ENCODE measurements at regions of chr2 and their contacts with region 1.

Region 1: DNA sequence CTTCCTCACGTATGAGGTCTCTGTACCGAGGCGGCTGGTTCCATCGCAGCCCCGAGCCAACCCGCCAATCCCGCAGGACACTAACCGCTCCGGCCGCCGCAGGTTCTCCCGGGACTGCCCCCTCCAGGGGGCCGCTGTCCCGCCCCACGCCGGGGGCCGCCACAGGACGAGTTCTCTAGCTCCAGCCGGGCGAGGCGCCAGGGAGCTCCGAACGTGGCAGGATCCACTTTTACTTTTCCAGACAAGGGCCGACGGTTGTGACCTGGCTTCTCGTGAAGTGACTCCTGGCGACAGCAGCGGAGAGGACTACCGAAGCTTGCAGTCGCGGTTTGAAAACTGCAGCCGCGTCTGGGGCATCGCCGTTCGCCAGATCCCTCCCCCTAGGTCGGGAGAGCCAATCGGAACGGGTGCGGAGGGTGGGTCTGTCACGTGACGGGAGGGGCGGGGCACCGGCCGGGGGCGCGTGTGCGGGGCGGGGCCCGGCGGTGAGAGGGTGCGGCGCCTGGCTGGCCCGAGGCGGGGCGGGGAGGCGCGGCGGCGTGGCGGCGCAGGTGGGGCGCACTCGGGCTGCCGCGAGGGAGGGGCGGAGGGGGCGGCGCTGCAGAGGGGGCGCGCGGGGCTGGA is at the start of gene STK17B:
- DNase-seq: peak; percentile 98
- H3K4me3 Mint-ChIP-seq: peak within 1 kb of the TSS; percentile 93
- H3K27ac Mint-ChIP-seq: peak within 1 kb of the TSS; percentile 96
- H3K4me1 Mint-ChIP-seq: peaks cover 40% of the 10 kb centered on the region
- H3K27me3 Mint-ChIP-seq: no peaks in the 10 kb centered on the region
- total RNA-seq, gene STK17B: 175 to 176 TPM

Region 2: GRCh38 chr2:195656859-195657633 is 514.3 kb before region 1 on chr2 and contains the start of gene SLC39A10:
- CTCF ChIA-PET with region 1: no interaction called
- POLR2A ChIA-PET with region 1: no interaction called
- intact Hi-C with region 1: loop called (anchors 2 kb)
- DNase-seq: peak; percentile 99
- H3K4me3 Mint-ChIP-seq: peak within 1 kb of the TSS; percentile 98
- H3K27ac Mint-ChIP-seq: peak within 1 kb of the TSS; percentile 100
- H3K4me1 Mint-ChIP-seq: peaks cover 35% of the 10 kb centered on the region
- H3K27me3 Mint-ChIP-seq: peaks cover 3% of the 10 kb centered on the region
- total RNA-seq, gene SLC39A10: 36.1 to 37.4 TPM

Region 3: GRCh38 chr2:195995499-195995898 is 175.9 kb before region 1 on chr2:
- CTCF ChIA-PET with region 1: no interaction called
- POLR2A ChIA-PET with region 1: no interaction called
- intact Hi-C with region 1: no loop called
- DNase-seq: no peak
- H3K4me3 Mint-ChIP-seq: no peak overlapping the region
- H3K27ac Mint-ChIP-seq: no peak overlapping the region
- H3K4me1 Mint-ChIP-seq: peaks cover 6% of the 10 kb centered on the region
- H3K27me3 Mint-ChIP-seq: peaks cover 3% of the 10 kb centered on the region

Region 4: GRCh38 chr2:196182439-196183171 is 11.2 kb after region 1 on chr2:
- CTCF ChIA-PET with region 1: interaction called, 5 read pairs
- POLR2A ChIA-PET with region 1: interaction called, 35 read pairs
- intact Hi-C with region 1: loop called (anchors 1 kb)
- DNase-seq: no peak
- H3K4me3 Mint-ChIP-seq: peak overlapping the region; percentile 75
- H3K27ac Mint-ChIP-seq: peak overlapping the region; percentile 88
- H3K4me1 Mint-ChIP-seq: peaks cover 77% of the 10 kb centered on the region
- H3K27me3 Mint-ChIP-seq: no peaks in the 10 kb centered on the region

Region 5: GRCh38 chr2:196239622-196240587 is 68.5 kb after region 1 on chr2:
- CTCF ChIA-PET with region 1: interaction called, 6 read pairs
- POLR2A ChIA-PET with region 1: interaction called, 17 read pairs
- intact Hi-C with region 1: loop called (anchors 1 kb)
- DNase-seq: peak; percentile 94
- H3K4me3 Mint-ChIP-seq: peak overlapping the region; percentile 36
- H3K27ac Mint-ChIP-seq: peak overlapping the region; percentile 87
- H3K4me1 Mint-ChIP-seq: peaks cover 84% of the 10 kb centered on the region
- H3K27me3 Mint-ChIP-seq: no peaks in the 10 kb centered on the region

Region 6: GRCh38 chr2:196926562-196927375 is 755.4 kb after region 1 on chr2 and contains the start of gene PGAP1:
- CTCF ChIA-PET with region 1: no interaction called
- POLR2A ChIA-PET with region 1: no interaction called
- intact Hi-C with region 1: loop called (anchors 10 kb)
- DNase-seq: peak; percentile 93
- H3K4me3 Mint-ChIP-seq: peak within 1 kb of the TSS; percentile 96
- H3K27ac Mint-ChIP-seq: peak within 1 kb of the TSS; percentile 100
- H3K4me1 Mint-ChIP-seq: peaks cover 35% of the 10 kb centered on the region
- H3K27me3 Mint-ChIP-seq: peaks cover 4% of the 10 kb centered on the region
- total RNA-seq, gene PGAP1: 24.5 to 25.5 TPM

Region 7: GRCh38 chr2:197499594-197500526 is 1328.5 kb after region 1 on chr2 and contains the starts of genes HSPD1 and HSPE1:
- CTCF ChIA-PET with region 1: no interaction called
- POLR2A ChIA-PET with region 1: no interaction called
- intact Hi-C with region 1: loop called (anchors 5 kb)
- DNase-seq: peak; percentile 99
- H3K4me3 Mint-ChIP-seq: peak within 1 kb of the TSS; percentile 97
- H3K27ac Mint-ChIP-seq: peak within 1 kb of the TSS; percentile 97
- H3K4me1 Mint-ChIP-seq: peaks cover 56% of the 10 kb centered on the region
- H3K27me3 Mint-ChIP-seq: no peaks in the 10 kb centered on the region
- total RNA-seq, gene HSPD1: 839 to 853 TPM
- total RNA-seq, gene HSPE1: 282 to 283 TPM